H1 (cell line): ENCODE measurements at regions of chr11 and their contacts with region 1.

Region 1: DNA sequence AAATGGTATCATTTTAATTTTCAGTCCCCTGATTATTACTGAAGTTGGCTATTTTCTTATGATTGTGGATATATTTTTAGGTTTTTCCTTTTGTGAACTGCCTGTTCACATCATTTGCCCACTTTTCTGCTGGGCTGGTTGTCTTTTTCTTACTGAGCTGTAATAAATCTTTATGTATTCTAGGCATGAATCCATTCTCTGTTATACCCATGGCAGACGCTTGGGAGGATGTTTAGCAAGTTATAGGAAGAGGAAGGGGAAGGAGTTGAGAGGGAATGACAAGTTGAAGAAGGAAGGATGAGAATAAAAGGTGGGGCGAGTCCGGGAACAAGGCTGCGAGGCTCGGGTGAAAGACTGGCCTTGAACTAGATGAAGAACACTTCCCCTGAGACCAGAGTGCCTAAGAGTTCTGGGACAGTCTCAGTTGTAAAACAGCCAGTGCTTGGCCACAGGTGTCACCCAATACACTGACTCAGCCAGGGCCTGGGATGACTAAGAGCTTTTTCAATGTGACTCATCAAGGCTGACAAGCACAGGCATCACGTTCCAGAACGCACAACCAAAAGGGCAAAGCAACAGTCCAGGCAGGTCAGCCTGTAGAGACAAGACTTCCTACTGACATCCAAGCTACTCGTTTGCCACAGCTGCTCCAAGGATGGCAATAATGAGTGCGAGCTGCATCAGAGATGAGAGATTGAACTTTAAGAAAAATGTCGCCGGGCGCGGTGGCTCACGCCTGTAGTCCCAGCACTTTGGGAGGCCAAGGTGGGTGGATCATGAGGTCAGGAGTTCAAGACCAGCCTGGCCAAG is 35.2 kb downstream of the LRFN4 start:
- DNase-seq: no peak
- H3K4me3 ChIP-seq: no peak overlapping the region
- H3K27ac ChIP-seq: no peak overlapping the region
- H3K4me1 ChIP-seq: peaks cover 0 to 9% (median 4%) of the 10 kb centered on the region in 4 experiments; a peak in 5 of 7 replicates
- H3K27me3 ChIP-seq: no peaks in the 10 kb centered on the region
- CTCF ChIP-seq: no peak
- EP300 ChIP-seq: no peak
- POLR2A ChIP-seq: no peak
- RAD21 ChIP-seq: no peak

Region 2: GRCh38 chr11:66915046-66915832 is 23.2 kb after region 1 on chr11:
- CTCF ChIA-PET with region 1: interaction called, 10 read pairs
- POLR2A ChIA-PET with region 1: interaction called, 3 read pairs
- DNase-seq: no peak
- H3K4me3 ChIP-seq: no peak overlapping the region
- H3K27ac ChIP-seq: no peak overlapping the region
- H3K4me1 ChIP-seq: peaks cover 5 to 21% (median 12%) of the 10 kb centered on the region in 4 experiments
- H3K27me3 ChIP-seq: no peaks in the 10 kb centered on the region
- CTCF ChIP-seq: peak; percentile 18 to 35 (median 19); a peak in 3 of 4 replicates
- EP300 ChIP-seq: no peak
- POLR2A ChIP-seq: no peak
- RAD21 ChIP-seq: peak in 1 of 2 experiments; percentile 24; a peak in 1 of 4 replicates